ENCODE measurements at regions of chr17 and their contacts with region 1.

Region 1: GRCh38 chr17:69995476-69995875 is 79.5 kb upstream of the KCNJ16 start:
- DNase-seq: no peak
- H3K4me3 ChIP-seq: no peak overlapping the region
- H3K27ac ChIP-seq: no peak overlapping the region
- H3K4me1 ChIP-seq: peaks cover 0 to 8% (median 0%) of the 10 kb centered on the region in 4 donors
- H3K27me3 ChIP-seq: no peaks in the 10 kb centered on the region
- CTCF ChIP-seq: no peak
- EP300 ChIP-seq: no peak
- POLR2A ChIP-seq: no peak

Region 2: GRCh38 chr17:69969897-69970296 is 25.6 kb before region 1 on chr17:
- in situ Hi-C with region 1: no loop called
- intact Hi-C with region 1: loop called (anchors 2 kb)
- DNase-seq: no peak
- H3K4me3 ChIP-seq: no peak overlapping the region
- H3K27ac ChIP-seq: no peak overlapping the region
- H3K4me1 ChIP-seq: no peaks in the 10 kb centered on the region
- H3K27me3 ChIP-seq: no peaks in the 10 kb centered on the region
- CTCF ChIP-seq: no peak
- EP300 ChIP-seq: no peak
- POLR2A ChIP-seq: no peak